ENCODE measurements at regions of chr5 and their contacts with region 1.

Region 1: GRCh38 chr5:139341650-139342422 is at the start of gene PAIP2:
- DNase-seq: peak; percentile 99
- H3K4me3 Mint-ChIP-seq: peak within 1 kb of the TSS; percentile 97
- H3K27ac Mint-ChIP-seq: peak within 1 kb of the TSS; percentile 100
- H3K4me1 Mint-ChIP-seq: peaks cover 20% of the 10 kb centered on the region
- H3K27me3 Mint-ChIP-seq: no peaks in the 10 kb centered on the region
- CTCF ChIP-seq: peak; percentile 85
- total RNA-seq, gene PAIP2: 104 and 108 TPM in 2 replicates

Region 2: GRCh38 chr5:139037732-139038131 is 304.1 kb before region 1 on chr5:
- CTCF ChIA-PET with region 1: no interaction called
- POLR2A ChIA-PET with region 1: no interaction called
- intact Hi-C with region 1: no loop called
- DNase-seq: no peak
- H3K4me3 Mint-ChIP-seq: no peak overlapping the region
- H3K27ac Mint-ChIP-seq: no peak overlapping the region
- H3K4me1 Mint-ChIP-seq: no peaks in the 10 kb centered on the region
- H3K27me3 Mint-ChIP-seq: no peaks in the 10 kb centered on the region
- CTCF ChIP-seq: no peak

Region 3: GRCh38 chr5:139287890-139288635 is 53.8 kb before region 1 on chr5:
- CTCF ChIA-PET with region 1: interaction called, 8 read pairs
- POLR2A ChIA-PET with region 1: interaction called, 107 read pairs
- intact Hi-C with region 1: loop called (anchors 2 kb)
- DNase-seq: peak; percentile 47
- H3K4me3 Mint-ChIP-seq: no peak overlapping the region
- H3K27ac Mint-ChIP-seq: no peak overlapping the region
- H3K4me1 Mint-ChIP-seq: peaks cover 26% of the 10 kb centered on the region
- H3K27me3 Mint-ChIP-seq: no peaks in the 10 kb centered on the region
- CTCF ChIP-seq: peak; percentile 12

Region 4: GRCh38 chr5:139306197-139306596 is 35.6 kb before region 1 on chr5:
- CTCF ChIA-PET with region 1: interaction called, 4 read pairs
- POLR2A ChIA-PET with region 1: interaction called, 30 read pairs
- intact Hi-C with region 1: no loop called
- DNase-seq: no peak
- H3K4me3 Mint-ChIP-seq: no peak overlapping the region
- H3K27ac Mint-ChIP-seq: no peak overlapping the region
- H3K4me1 Mint-ChIP-seq: peaks cover 57% of the 10 kb centered on the region
- H3K27me3 Mint-ChIP-seq: no peaks in the 10 kb centered on the region
- CTCF ChIP-seq: no peak

Region 5: DNA sequence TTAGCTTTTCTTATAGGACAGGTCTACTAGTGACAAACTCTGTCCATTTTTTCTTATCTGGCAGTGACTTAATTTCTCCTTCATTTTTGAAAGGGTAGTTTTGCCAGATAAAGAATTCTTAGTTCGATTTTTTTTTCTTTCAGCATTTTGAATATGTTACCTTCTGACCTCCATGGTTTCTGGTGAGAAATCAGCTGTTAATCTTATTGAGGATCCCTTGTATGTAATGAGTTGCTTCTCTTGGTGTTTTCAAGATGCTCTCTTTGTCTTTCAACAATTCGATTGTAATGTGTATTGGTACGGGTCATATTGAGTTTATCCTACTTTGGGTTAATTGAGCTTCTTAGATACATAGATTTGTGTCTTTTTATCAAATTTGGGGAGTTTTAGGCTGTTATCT is 12.3 kb after region 1 on chr5:
- CTCF ChIA-PET with region 1: interaction called, 16 read pairs
- POLR2A ChIA-PET with region 1: interaction called, 33 read pairs
- intact Hi-C with region 1: no loop called
- DNase-seq: no peak
- H3K4me3 Mint-ChIP-seq: no peak overlapping the region
- H3K27ac Mint-ChIP-seq: no peak overlapping the region
- H3K4me1 Mint-ChIP-seq: peaks cover 16% of the 10 kb centered on the region
- H3K27me3 Mint-ChIP-seq: no peaks in the 10 kb centered on the region
- CTCF ChIP-seq: no peak

Region 6: DNA sequence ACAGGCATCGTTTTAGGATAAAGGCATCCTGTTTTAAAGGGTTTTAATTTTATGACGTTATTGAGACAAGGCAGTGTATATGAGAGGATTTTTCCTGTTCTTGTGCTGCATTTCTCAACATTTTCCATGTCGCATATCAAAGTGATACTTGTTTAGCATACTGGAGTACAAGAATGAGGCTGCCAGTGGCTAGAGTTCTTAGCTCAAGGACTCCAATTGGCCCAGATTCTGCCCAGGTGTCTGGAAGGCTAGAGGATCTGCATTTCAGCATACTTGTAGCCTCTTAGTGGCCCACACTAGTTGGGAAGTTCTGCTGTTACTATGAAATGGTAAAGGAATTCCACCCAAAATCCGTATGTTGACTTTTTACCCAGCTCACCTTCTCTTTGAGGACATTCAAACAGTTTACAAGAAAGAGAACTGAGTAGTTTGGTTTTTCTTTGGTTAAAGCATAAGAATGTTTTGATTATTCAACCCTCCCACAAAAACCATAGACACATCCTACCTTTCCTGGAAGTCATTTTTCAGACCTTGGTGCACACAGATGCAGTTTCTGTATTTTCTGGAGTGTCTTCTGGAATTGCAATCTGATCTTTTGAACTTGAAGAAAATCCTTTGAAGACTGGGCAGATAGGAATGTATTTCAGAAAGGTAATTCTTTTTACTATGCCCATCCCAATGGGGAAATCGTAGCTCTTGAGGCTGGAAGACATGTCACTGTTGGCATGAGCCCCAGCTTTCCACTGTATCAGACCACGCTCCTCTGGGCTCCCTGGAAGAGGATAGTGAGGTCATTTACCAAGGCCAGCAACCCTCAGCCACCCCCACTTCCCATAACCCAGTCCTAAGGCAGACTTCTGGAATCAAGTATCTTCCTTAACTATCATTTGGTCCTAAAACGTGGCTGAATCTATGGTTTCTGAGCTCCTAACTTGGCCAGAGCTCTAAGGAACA is 29.9 kb after region 1 on chr5:
- CTCF ChIA-PET with region 1: interaction called, 3 read pairs
- POLR2A ChIA-PET with region 1: interaction called, 44 read pairs
- intact Hi-C with region 1: no loop called
- DNase-seq: no peak
- H3K4me3 Mint-ChIP-seq: no peak overlapping the region
- H3K27ac Mint-ChIP-seq: peak overlapping the region; percentile 82
- H3K4me1 Mint-ChIP-seq: peaks cover 11% of the 10 kb centered on the region
- H3K27me3 Mint-ChIP-seq: no peaks in the 10 kb centered on the region
- CTCF ChIP-seq: no peak

Region 7: GRCh38 chr5:139560752-139561654 is 219.2 kb after region 1 on chr5 and contains the start of gene UBE2D2:
- CTCF ChIA-PET with region 1: interaction called, 3 read pairs
- POLR2A ChIA-PET with region 1: interaction called, 26 read pairs
- intact Hi-C with region 1: no loop called
- DNase-seq: peak; percentile 98
- H3K4me3 Mint-ChIP-seq: peak within 1 kb of the TSS; percentile 85
- H3K27ac Mint-ChIP-seq: peak within 1 kb of the TSS; percentile 88
- H3K4me1 Mint-ChIP-seq: peaks cover 12% of the 10 kb centered on the region
- H3K27me3 Mint-ChIP-seq: no peaks in the 10 kb centered on the region
- CTCF ChIP-seq: no peak
- total RNA-seq, gene UBE2D2: 306 and 329 TPM in 2 replicates